ENCODE measurements at regions of chr3 and their contacts with region 1.

Region 1: GRCh38 chr3:132682201-132682600 is 22.1 kb downstream of the UBA5 start:
- DNase-seq: no peak
- ATAC-seq: no peak
- H3K4me3 ChIP-seq: no peak overlapping the region
- H3K4me3 Mint-ChIP-seq: no peak overlapping the region
- H3K27ac ChIP-seq: no peak overlapping the region
- H3K27ac Mint-ChIP-seq: peak overlapping the region in 6 of 9 donors; percentile 5 to 75 (median 33)
- H3K4me1 ChIP-seq: no peaks in the 10 kb centered on the region
- H3K4me1 Mint-ChIP-seq: peaks cover 0 to 6% (median 0%) of the 10 kb centered on the region in 7 donors
- H3K27me3 ChIP-seq: no peaks in the 10 kb centered on the region
- H3K27me3 Mint-ChIP-seq: no peaks in the 10 kb centered on the region

Region 2: DNA sequence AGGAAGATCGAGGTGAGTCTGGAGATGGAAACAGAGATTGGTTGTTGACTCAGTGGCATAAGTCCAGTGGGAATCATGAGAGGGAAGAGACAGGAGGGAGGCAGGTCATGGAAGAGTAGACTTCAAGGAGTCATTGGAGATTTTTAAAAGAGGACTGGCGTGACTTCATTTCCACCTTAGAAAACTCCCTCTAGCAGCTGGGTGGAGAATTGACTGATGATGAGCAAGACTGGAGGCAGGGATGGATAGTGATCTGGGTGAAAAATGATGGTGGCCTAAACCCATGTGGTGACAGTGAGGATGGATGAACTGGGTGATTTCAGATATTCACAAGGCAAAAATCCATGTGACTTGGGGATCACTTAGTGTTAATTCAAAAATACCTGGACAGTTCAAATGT is 624.3 kb before region 1 on chr3:
- CTCF ChIA-PET with region 1: no interaction called
- POLR2A ChIA-PET with region 1: no interaction called
- intact Hi-C with region 1: no loop called
- DNase-seq: no peak
- ATAC-seq: no peak
- H3K4me3 ChIP-seq: no peak overlapping the region
- H3K4me3 Mint-ChIP-seq: no peak overlapping the region
- H3K27ac ChIP-seq: no peak overlapping the region
- H3K27ac Mint-ChIP-seq: no peak overlapping the region
- H3K4me1 ChIP-seq: no peaks in the 10 kb centered on the region
- H3K4me1 Mint-ChIP-seq: no peaks in the 10 kb centered on the region
- H3K27me3 ChIP-seq: no peaks in the 10 kb centered on the region
- H3K27me3 Mint-ChIP-seq: peaks cover 0 to 16% (median 15%) of the 10 kb centered on the region in 5 donors

Region 3: DNA sequence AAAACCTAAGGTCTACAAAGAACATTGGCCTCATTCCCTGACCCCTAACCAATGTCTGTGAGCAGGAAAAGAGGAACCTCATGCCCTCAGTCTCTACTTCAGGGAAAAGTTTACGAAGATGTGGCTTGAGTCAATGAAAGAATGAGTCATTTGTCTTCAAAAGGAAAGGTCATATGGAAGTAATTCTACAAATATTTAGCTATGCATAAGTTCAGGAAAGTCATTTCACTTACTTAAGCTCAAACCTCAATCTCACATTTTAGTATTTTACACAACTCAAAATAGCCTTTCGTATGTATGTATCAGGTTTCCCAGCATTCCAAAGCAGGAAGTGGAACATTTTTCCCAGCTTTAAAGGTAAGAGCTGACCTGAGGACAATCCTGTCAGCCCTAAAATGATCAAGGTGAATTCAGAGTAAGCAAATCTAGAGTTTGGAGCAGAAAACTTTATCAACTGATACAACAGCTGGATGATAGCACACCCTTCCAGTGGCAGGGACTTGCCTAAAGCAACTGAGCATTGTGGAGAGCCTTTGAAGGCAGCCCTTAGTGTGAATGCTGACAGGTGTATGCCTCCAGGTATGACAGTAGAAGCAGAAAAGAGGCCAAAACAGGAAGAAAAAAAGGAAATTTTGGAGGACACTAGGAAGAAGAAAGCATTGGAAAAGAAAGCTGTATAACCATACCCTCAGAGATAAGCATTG is 139.0 kb before region 1 on chr3:
- CTCF ChIA-PET with region 1: no interaction called
- POLR2A ChIA-PET with region 1: no interaction called
- intact Hi-C with region 1: no loop called
- DNase-seq: no peak
- ATAC-seq: peak; percentile 45
- H3K4me3 ChIP-seq: no peak overlapping the region
- H3K4me3 Mint-ChIP-seq: peak overlapping the region in 1 of 10 donors; percentile 18
- H3K27ac ChIP-seq: no peak overlapping the region
- H3K27ac Mint-ChIP-seq: peak overlapping the region in 4 of 9 donors; percentile 37 to 60 (median 52)
- H3K4me1 ChIP-seq: no peaks in the 10 kb centered on the region
- H3K4me1 Mint-ChIP-seq: peaks cover 0 to 32% (median 0%) of the 10 kb centered on the region in 7 donors
- H3K27me3 ChIP-seq: no peaks in the 10 kb centered on the region
- H3K27me3 Mint-ChIP-seq: no peaks in the 10 kb centered on the region

Region 4: DNA sequence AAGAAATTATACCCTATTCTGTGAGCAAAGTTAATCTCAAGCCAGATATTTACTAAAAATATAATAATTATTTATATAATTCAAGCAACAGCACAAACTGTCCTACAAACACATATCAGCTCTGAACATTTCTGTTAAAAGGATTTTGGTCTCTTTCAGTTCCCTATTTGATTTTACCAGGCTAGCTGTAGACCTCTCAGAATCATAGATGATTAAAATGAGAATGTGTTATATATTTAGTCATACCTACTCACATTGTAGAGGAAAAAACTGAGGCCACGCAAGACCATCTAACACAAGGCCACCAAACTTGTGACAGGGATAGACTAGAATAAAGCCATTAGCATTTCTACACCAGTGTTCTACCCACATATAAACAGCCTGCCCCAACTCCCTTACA is 56.6 kb before region 1 on chr3:
- CTCF ChIA-PET with region 1: no interaction called
- POLR2A ChIA-PET with region 1: no interaction called
- intact Hi-C with region 1: no loop called
- DNase-seq: no peak
- ATAC-seq: no peak
- H3K4me3 ChIP-seq: no peak overlapping the region
- H3K4me3 Mint-ChIP-seq: no peak overlapping the region
- H3K27ac ChIP-seq: no peak overlapping the region
- H3K27ac Mint-ChIP-seq: peak overlapping the region in 1 of 9 donors; percentile 14
- H3K4me1 ChIP-seq: no peaks in the 10 kb centered on the region
- H3K4me1 Mint-ChIP-seq: peaks cover 0 to 25% (median 4%) of the 10 kb centered on the region in 7 donors
- H3K27me3 ChIP-seq: no peaks in the 10 kb centered on the region
- H3K27me3 Mint-ChIP-seq: no peaks in the 10 kb centered on the region

Region 5: DNA sequence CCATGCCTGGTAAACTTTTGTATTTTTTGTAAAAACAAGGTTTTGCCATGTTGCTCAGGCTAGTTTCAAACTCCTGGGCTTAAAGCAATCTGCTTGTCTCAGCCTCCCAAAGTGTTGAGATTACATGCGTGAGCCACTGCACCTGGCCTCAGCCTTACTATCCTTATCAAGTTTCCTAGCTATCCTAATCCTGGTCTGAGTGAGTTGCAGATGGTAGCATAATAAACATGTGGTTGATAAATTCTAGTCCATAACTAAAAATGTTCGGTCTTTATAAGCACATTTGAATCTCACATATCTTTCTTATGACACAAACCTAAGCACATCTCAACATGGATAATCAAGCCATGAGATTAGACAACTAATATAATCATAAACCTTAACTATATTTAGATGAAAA is 21.5 kb after region 1 on chr3:
- CTCF ChIA-PET with region 1: no interaction called
- POLR2A ChIA-PET with region 1: no interaction called
- intact Hi-C with region 1: loop called in 1 of 2 experiments (anchors 2 kb)
- DNase-seq: no peak
- ATAC-seq: no peak
- H3K4me3 ChIP-seq: no peak overlapping the region
- H3K4me3 Mint-ChIP-seq: no peak overlapping the region
- H3K27ac ChIP-seq: no peak overlapping the region
- H3K27ac Mint-ChIP-seq: peak overlapping the region in 1 of 9 donors; percentile 19
- H3K4me1 ChIP-seq: no peaks in the 10 kb centered on the region
- H3K4me1 Mint-ChIP-seq: peaks cover 3 to 15% (median 8%) of the 10 kb centered on the region in 7 donors
- H3K27me3 ChIP-seq: no peaks in the 10 kb centered on the region
- H3K27me3 Mint-ChIP-seq: no peaks in the 10 kb centered on the region

Region 6: DNA sequence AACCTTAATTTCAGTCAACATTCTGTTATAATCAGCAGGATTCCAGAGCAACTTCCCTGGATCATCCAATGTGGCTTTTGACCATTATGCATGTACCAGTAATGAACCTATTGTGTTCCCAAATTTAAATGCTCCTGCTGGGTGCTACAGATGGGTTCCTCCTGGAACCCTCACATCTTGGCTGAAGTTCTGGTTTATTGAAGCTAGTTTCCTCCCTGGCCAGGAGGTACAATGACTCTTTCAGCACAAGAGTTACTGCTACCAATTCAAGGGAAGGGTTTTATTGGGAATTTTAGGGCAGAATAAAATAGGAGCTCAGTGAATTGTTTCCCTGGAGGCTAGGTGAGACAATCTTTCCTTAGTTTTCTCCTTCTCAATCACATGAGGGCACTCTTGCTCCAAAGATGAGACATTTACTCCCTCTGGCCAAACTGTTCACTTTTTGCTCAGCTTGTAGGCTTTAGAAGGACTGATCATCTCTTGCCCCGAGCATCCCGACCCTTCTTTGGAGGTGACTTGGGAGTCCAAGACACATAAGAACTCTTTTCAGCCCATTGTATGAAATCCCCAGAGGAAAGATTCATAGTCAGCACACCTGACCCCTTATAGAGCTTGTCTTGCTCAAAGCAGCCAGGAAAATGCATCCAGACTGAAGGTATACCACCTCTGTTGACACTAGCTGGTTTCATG is 48.8 kb after region 1 on chr3:
- CTCF ChIA-PET with region 1: no interaction called
- POLR2A ChIA-PET with region 1: no interaction called
- intact Hi-C with region 1: no loop called
- DNase-seq: no peak
- ATAC-seq: no peak
- H3K4me3 ChIP-seq: no peak overlapping the region
- H3K4me3 Mint-ChIP-seq: no peak overlapping the region
- H3K27ac ChIP-seq: no peak overlapping the region
- H3K27ac Mint-ChIP-seq: no peak overlapping the region
- H3K4me1 ChIP-seq: no peaks in the 10 kb centered on the region
- H3K4me1 Mint-ChIP-seq: peaks cover 0 to 5% (median 0%) of the 10 kb centered on the region in 7 donors
- H3K27me3 ChIP-seq: peaks cover 4 to 7% of the 10 kb centered on the region in 2 donors
- H3K27me3 Mint-ChIP-seq: peaks cover 7 to 56% (median 26%) of the 10 kb centered on the region in 5 donors